Heart right ventricle (tissue), 16 donors: ENCODE measurements at regions of chr10 and their contacts with region 1.

Region 1: DNA sequence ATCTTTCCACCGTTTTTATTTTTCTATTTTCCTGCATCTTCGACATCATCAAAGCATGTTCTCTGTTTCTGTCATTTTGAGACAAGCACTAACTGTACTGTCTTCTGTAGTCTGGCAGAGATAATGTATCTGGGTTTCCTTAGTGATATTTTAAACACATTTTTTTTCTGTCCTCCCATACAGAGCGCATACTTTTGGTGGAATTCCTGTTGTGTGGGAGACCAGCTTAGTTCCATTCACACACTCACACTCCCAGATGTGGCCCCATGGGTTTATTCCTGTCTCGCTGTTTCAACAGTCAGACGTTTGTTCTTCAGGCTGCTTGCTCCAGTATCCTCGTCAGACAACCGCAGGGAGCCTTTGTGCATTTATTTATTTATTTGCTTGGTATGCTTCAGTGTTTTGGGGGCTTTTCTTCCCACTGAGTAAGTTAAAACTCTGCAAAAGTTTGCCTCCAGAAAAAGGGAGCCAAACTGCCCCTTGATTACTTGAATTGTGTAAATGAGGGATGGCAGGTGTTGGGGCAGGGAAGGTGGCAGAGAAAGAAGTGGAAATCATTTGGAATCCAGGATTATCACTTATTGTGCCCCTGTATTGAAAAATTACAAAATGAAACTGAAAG is 456.8 kb upstream of the KLF6 start:
- DNase-seq: peak in 1 of 2 donors; percentile 87
- ATAC-seq: peak; percentile 82 to 92 (median 90)
- H3K4me3 ChIP-seq: peak overlapping the region in 9 of 10 donors; percentile 10 to 56 (median 45)
- H3K27ac ChIP-seq: peak overlapping the region; percentile 72 to 96 (median 89)
- H3K4me1 ChIP-seq: peaks cover 0 to 62% (median 46%) of the 10 kb centered on the region in 9 donors
- H3K27me3 ChIP-seq: no peaks in the 10 kb centered on the region
- CTCF ChIP-seq: no peak

Region 2: GRCh38 chr10:3805791-3806461 is 435.9 kb before region 1 on chr10:
- intact Hi-C with region 1: loop called in 1 of 10 experiments (anchors 10 kb)
- DNase-seq: peak; percentile 24 to 74
- ATAC-seq: peak in 7 of 8 donors; percentile 9 to 64 (median 27)
- H3K4me3 ChIP-seq: peak overlapping the region in 6 of 10 donors; percentile 1 to 25 (median 8)
- H3K27ac ChIP-seq: peak overlapping the region; percentile 51 to 95 (median 89)
- H3K4me1 ChIP-seq: peaks cover 12 to 88% (median 71%) of the 10 kb centered on the region in 9 donors
- H3K27me3 ChIP-seq: no peaks in the 10 kb centered on the region
- CTCF ChIP-seq: no peak

Region 3: DNA sequence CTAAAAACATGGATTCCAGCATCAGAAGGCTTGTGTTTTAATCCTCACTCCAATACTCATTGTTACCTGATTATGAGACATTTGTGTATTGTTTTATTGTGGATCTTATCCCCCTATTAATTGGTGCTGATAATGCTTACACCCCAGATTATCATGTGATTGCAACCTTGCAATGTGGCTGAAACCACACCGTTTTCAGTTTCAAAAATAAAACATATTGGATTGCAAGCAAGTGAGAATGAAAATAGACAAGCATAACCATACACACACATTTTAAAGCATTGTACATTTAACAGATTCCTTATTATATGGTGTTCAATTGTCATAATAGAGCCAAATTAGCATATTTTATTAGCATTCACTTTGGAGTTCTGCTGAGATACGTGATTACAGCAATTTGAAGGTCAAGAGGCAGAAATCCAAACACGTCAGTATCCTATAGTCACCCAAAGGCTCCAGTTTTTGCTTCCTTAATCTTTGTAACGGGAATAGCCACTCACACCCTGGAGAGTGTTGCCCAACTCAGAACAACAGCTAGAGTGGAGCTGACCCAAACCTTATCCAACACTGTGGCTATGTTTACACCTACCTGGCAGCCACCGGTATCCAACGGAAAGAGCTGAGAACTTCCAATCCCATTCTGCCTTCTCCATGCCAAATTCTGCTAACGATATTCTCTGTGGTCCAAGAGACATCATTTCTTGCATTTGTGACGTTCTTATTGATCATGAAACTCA is 139.7 kb before region 1 on chr10:
- intact Hi-C with region 1: loop called in 1 of 10 experiments (anchors 10 kb)
- DNase-seq: no peak
- ATAC-seq: peak in 5 of 8 donors; percentile 58 to 100 (median 86)
- H3K4me3 ChIP-seq: no peak overlapping the region
- H3K27ac ChIP-seq: no peak overlapping the region
- H3K4me1 ChIP-seq: peaks cover 0 to 15% (median 0%) of the 10 kb centered on the region in 9 donors
- H3K27me3 ChIP-seq: no peaks in the 10 kb centered on the region
- CTCF ChIP-seq: no peak

Region 4: DNA sequence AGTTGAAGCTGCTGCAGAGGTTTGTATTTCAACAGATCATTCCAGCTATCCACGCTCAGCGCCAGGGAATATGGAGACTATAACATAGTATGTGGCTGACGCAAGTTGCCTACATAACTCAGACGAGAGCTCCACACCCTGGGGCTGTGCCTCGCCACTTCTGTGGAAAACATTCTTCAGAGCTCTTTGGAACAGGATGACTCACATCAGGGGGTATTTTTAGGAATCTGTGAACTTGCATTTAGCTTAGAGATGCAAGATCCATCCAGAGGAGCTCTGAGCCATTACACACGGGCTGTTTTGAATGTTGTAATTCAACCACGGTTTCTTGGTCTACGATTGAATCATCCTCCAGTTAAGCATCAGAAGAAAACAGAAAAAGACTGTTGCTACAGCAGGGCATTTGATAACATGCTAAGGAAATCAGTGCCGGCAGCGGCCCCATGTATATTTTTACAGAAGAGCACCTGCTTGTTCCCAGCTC is 102.7 kb after region 1 on chr10:
- intact Hi-C with region 1: loop called in 3 of 10 experiments (anchors 10 kb)
- DNase-seq: peak; percentile 39 to 72
- ATAC-seq: peak; percentile 78 to 99 (median 92)
- H3K4me3 ChIP-seq: peak overlapping the region in 1 of 10 donors; percentile 2
- H3K27ac ChIP-seq: peak overlapping the region; percentile 37 to 85 (median 68)
- H3K4me1 ChIP-seq: peaks cover 2 to 34% (median 24%) of the 10 kb centered on the region in 9 donors
- H3K27me3 ChIP-seq: no peaks in the 10 kb centered on the region
- CTCF ChIP-seq: peak in 4 of 9 donors; percentile 21 to 37 (median 34)

Region 5: DNA sequence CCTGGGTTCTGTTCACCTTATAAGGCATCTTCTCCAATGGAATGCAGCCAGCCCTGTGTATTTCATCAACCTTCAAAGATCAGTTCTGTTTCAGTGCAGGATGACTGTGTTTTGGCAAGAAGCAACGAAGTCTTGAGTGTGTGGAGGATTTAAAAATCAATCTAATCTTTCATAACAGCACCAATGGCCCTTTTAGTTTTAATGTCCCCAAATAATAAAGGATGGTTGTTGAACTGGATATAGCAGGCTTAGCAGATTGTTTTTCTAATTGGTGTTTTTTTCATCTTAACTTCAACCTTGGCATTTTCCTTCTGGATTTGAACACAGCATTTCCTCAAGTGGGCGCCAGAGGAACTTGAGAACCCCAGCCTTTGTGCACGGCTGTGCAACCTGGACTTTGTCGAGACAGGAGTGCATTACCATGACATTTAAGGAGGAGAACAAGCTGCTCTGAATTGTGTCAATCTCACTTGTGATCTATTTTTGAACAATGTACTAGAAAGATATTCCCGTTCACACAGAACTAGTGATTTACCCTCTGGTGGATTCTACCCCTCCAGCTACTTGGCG is 270.9 kb after region 1 on chr10:
- intact Hi-C with region 1: loop called in 2 of 10 experiments (anchors 5 to 10 kb)
- DNase-seq: peak; percentile 40 to 58
- ATAC-seq: peak; percentile 49 to 94 (median 76)
- H3K4me3 ChIP-seq: no peak overlapping the region
- H3K27ac ChIP-seq: peak overlapping the region in 9 of 10 donors; percentile 2 to 90 (median 77)
- H3K4me1 ChIP-seq: peaks cover 0 to 48% (median 34%) of the 10 kb centered on the region in 9 donors
- H3K27me3 ChIP-seq: no peaks in the 10 kb centered on the region
- CTCF ChIP-seq: peak; percentile 21 to 71 (median 56)

Region 6: DNA sequence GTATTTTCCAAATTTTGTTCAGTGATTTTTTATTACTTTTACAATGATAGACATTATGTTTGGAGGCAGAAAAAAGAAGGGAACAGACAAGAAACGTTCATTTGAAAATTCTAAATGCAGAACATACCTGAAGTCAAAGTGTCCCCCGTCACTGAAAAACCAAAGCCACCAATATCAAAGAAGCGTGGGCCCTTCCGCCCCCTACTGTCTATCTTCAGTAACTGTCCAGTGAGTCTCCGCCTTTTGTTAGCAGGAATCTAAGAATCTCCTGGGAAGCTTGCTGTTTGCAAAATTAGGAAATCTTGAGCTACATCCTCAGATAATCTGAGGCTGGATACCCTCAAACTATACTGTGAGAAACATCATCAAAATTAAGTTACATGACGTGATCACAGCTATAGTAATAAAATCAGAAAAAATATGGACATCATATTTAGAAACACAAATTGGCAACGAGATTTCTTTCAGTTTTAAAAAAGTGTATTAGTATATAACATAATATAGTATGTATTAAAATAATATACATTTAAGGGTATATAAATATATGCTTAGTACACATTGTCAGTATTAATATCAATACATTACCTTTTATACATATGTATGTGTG is 414.8 kb after region 1 on chr10:
- intact Hi-C with region 1: loop called in 4 of 10 experiments (anchors 5 to 10 kb)
- DNase-seq: peak; percentile 33 to 70
- ATAC-seq: peak in 6 of 8 donors; percentile 50 to 72 (median 64)
- H3K4me3 ChIP-seq: no peak overlapping the region
- H3K27ac ChIP-seq: no peak overlapping the region
- H3K4me1 ChIP-seq: peaks cover 0 to 34% (median 10%) of the 10 kb centered on the region in 9 donors
- H3K27me3 ChIP-seq: no peaks in the 10 kb centered on the region
- CTCF ChIP-seq: peak; percentile 79 to 95 (median 93)